Dorsolateral prefrontal cortex (tissue), 120 donors: ENCODE measurements at regions of chr4 and their contacts with region 1.

Region 1: GRCh38 chr4:153344131-153345010 is at the start of gene MND1:
- DNase-seq: peak; percentile 67 to 90 (median 82)
- H3K4me3 ChIP-seq: peak within 1 kb of the TSS; percentile 51 to 95 (median 80)
- H3K27ac ChIP-seq: peak within 1 kb of the TSS in 56 of 59 donors; percentile 9 to 89 (median 76)
- H3K27me3 ChIP-seq: no peaks in the 10 kb centered on the region
- CTCF ChIP-seq: peak; percentile 71 to 99 (median 95)
- total RNA-seq, gene MND1: 0.51 to 6.0 (median 1.5) TPM in 96 of 120 experiments, not detected in the others

Region 2: GRCh38 chr4:152843481-152844090 is 500.8 kb before region 1 on chr4:
- intact Hi-C with region 1: loop called in 1 of 2 experiments (anchors 10 kb)
- DNase-seq: no peak
- H3K4me3 ChIP-seq: no peak overlapping the region
- H3K27ac ChIP-seq: no peak overlapping the region
- H3K27me3 ChIP-seq: no peaks in the 10 kb centered on the region
- CTCF ChIP-seq: no peak

Region 3: DNA sequence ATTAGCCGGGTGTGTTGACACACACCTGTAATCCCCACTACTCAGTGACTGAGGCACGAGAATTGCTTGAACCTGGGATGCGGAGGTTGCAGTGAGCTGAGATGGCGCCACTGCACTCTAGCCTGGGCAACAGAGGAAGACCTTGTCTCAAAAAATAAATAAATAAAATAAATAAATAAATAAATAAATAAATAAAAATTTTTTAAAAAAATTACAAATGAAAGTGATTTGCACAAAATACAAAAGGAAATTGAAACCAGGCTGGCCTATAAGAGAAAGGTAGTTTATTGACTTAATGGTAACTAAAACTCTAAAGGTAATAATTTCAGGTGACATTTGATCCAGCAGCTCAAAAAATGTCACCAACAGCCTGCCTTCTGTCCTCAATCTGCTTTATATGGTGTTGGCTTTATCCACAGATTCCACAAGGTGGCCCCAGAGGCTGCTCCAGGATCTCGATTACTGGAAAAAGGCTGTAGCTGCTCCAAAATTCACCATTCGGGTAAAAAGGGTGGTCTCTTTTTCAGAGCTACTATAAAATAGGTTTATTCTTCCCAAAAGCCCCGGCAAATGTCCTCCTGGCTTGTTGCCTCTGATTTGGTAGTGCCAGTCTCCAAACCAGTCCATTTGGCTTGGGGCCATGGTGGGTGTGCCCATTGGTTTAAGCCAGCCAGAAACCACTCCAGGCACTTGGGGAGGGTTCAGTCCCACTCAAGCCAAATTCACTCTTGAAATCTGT is 201.5 kb before region 1 on chr4:
- intact Hi-C with region 1: loop called in 1 of 2 experiments (anchors 5 kb)
- DNase-seq: peak; percentile 52 to 87 (median 72)
- H3K4me3 ChIP-seq: peak overlapping the region in 17 of 59 donors; percentile 1 to 32 (median 11)
- H3K27ac ChIP-seq: peak overlapping the region in 55 of 59 donors; percentile 2 to 100 (median 74)
- H3K27me3 ChIP-seq: no peaks in the 10 kb centered on the region
- CTCF ChIP-seq: peak; percentile 65 to 96 (median 89)

Region 4: DNA sequence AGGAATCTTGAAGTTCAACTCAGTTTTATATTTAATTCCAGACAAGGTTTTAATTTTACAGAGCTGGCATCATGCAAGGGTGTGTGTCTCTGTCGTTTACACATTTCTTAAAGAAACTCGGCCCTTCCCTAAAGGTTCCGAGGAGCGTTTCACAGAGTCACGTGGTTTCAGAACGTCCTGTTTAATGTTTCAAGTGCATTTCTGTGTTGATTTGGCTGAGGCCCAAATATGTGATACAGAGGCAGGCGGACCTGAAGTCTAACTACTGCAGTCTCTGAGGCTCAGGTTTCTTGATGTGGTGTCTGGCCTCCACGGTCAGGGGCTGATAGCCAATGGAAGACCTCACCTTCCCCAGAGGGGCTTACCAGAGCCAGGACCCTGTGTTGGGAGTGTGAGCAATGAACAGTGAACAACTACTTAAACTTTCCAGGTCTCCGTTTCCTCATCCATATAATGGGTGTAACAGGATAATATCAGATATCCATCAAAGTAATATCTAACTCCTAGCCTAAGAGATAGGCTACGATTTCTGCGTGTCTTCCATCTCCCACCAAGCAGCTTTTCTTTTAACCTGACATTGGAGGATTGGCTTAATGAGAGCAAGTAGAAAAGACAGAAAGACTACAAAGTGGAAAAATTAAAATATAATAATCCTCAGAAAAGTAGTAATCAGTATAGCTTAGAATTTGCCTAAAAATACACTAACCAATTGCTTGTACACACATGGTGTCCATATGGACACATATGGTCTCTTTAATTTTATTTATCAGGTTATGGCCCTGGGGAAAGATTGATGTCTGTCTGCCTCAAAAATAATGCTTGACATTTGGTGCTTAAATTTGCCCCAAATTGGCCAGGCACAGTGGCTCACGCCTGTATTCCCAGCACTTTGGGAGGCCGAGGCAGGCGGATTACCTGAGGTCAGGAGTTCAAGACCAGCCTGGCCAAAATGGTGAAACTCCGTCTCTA is 190.1 kb before region 1 on chr4:
- intact Hi-C with region 1: no loop called
- DNase-seq: no peak
- H3K4me3 ChIP-seq: peak overlapping the region; percentile 52 to 85 (median 71)
- H3K27ac ChIP-seq: peak overlapping the region in 57 of 59 donors; percentile 72 to 95 (median 88)
- H3K27me3 ChIP-seq: no peaks in the 10 kb centered on the region
- CTCF ChIP-seq: peak in 1 of 56 donors; percentile 5

Region 5: DNA sequence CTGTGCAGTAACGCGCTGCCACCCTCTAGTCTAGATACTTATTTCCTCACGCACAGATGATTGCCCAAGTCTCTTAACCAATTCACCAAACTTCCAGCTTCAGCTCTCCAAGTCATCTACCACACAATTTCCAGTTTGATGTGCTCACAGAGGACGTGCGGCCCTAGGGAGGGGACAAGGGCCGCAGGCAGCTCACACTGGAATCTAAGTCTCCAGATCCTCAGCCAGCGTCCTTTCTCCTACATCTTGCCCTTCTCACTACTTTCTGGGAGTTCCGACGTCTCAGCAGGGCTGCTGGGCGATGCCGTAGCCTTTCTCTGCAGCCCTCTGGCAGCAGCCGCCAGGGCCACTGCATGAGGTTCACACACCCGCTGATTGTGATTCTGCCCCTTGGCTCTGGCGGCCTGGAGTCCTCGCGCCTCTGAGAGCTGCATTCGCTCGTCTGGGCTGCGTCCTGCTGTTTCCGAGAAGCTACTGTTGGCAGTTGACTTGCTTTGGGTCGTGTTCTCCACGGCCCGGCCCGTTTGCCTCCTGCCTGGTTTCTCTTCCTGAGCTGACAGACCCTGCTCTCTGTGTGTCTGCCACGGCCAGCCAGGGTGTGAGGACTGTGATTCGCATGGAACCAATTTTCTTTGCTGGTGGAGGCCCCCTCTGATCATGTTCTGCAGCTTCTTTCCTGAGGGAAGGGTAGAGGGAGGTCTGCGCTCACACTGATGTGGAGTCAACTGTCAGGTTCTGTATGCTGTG is 107.7 kb after region 1 on chr4:
- intact Hi-C with region 1: no loop called
- DNase-seq: no peak
- H3K4me3 ChIP-seq: no peak overlapping the region
- H3K27ac ChIP-seq: no peak overlapping the region
- H3K27me3 ChIP-seq: no peaks in the 10 kb centered on the region
- CTCF ChIP-seq: no peak

Region 6: DNA sequence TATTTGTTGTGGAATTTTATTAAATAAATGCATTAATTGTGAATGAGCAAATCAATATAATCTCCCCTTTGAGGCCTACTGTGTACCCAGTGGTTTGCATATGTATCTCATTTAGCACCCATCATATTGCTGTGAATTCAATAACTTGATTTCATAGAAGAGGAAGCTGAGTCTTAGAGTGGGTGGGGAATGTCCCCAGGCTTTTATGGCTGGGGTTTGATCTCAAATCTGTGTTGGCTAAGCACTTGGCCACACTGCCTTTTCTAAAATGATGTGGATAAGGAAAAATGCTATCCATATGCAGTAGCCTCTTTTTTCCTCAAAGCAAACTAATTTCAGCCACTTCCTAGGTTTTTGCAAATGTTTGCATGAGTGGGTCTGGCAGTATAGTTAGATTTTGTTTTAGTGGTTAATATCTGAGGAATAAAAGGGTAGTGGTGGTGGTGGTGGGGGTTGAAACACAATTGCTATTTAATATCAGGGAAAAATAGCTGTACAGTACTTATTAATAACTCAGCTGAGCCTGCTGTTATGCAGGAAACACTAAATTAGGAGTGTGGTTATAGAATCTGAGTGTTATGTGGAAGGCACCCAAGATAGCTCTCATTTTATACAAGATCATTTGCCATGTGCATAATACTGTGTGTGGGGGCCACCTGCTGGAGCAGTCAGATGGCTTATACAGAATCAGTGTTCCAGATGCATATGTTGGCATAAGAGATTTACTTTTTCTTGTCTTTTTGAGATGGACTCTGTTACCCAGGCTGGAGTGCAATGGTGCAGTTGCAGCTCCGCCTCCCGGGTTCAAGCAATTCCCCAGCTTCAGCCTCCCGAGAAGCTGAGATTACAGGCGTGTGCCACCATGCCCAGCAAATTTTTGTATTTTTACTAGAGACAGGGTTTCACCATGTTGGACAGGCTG is 229.8 kb after region 1 on chr4:
- intact Hi-C with region 1: loop called (anchors 1 to 2 kb)
- DNase-seq: peak; percentile 7 to 95 (median 80)
- H3K4me3 ChIP-seq: no peak overlapping the region
- H3K27ac ChIP-seq: peak overlapping the region in 15 of 59 donors; percentile 12 to 69 (median 44)
- H3K27me3 ChIP-seq: no peaks in the 10 kb centered on the region
- CTCF ChIP-seq: peak in 55 of 56 donors; percentile 55 to 85 (median 73)

Region 7: GRCh38 chr4:153750197-153750817 is 405.9 kb after region 1 on chr4:
- intact Hi-C with region 1: loop called in 1 of 2 experiments (anchors 10 kb)
- DNase-seq: peak in 7 of 10 donors; percentile 21 to 70 (median 49)
- H3K4me3 ChIP-seq: no peak overlapping the region
- H3K27ac ChIP-seq: no peak overlapping the region
- H3K27me3 ChIP-seq: no peaks in the 10 kb centered on the region
- CTCF ChIP-seq: peak; percentile 28 to 83 (median 70)